ENCODE measurements at regions of chr9 and their contacts with region 1.

Region 1: GRCh38 chr9:132372177-132373095 is 17.6 kb upstream of the SETX start:
- DNase-seq: no peak
- ATAC-seq: no peak
- H3K4me3 Mint-ChIP-seq: peak overlapping the region in 5 of 10 donors; percentile 2 to 60 (median 52)
- H3K27ac Mint-ChIP-seq: peak overlapping the region in 9 of 10 donors; percentile 0 to 91 (median 76)
- H3K4me1 Mint-ChIP-seq: peaks cover 8 to 26% (median 14%) of the 10 kb centered on the region in 4 donors
- H3K27me3 Mint-ChIP-seq: peaks cover 0 to 1% (median 0%) of the 10 kb centered on the region in 5 donors

Region 2: GRCh38 chr9:132312873-132313272 is 59.6 kb before region 1 on chr9:
- POLR2A ChIA-PET with region 1: no interaction called
- DNase-seq: no peak
- ATAC-seq: no peak
- H3K4me3 Mint-ChIP-seq: no peak overlapping the region
- H3K27ac Mint-ChIP-seq: peak overlapping the region in 5 of 10 donors; percentile 1 to 31 (median 14)
- H3K4me1 Mint-ChIP-seq: peaks cover 7 to 32% (median 29%) of the 10 kb centered on the region in 4 donors
- H3K27me3 Mint-ChIP-seq: no peaks in the 10 kb centered on the region

Region 3: GRCh38 chr9:132354637-132355355 is 17.6 kb before region 1 on chr9 and contains the start of gene SETX:
- POLR2A ChIA-PET with region 1: interaction called, 13 read pairs
- DNase-seq: peak; percentile 84 to 97 (median 92)
- ATAC-seq: peak; percentile 86 to 89
- H3K4me3 Mint-ChIP-seq: peak within 1 kb of the TSS; percentile 66 to 96 (median 92)
- H3K27ac Mint-ChIP-seq: peak within 1 kb of the TSS; percentile 95 to 99 (median 97)
- H3K4me1 Mint-ChIP-seq: peaks cover 20 to 47% (median 41%) of the 10 kb centered on the region in 4 donors
- H3K27me3 Mint-ChIP-seq: peaks cover 0 to 1% (median 0%) of the 10 kb centered on the region in 5 donors
- polyA plus RNA-seq, gene SETX: 21.4 to 29.1 (median 25.9) TPM

Region 4: DNA sequence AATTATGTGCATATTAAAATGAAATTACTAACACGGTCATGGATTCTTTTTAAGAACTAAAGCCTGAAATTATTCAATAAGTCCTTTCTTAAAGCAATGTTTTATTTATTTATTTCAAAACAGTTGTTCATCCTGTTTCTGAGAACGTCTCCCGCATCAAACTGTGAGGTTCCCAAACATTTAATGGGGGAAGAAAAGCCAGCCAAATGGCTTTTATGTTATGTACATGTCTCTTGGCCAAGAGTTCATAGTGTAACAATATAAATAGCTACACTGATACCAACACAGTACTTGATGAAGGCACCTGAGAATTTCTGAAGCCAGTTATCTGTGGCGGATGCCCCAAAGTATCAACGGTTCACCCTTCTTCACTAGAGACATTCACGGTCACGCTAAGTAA is 18.5 kb after region 1 on chr9:
- POLR2A ChIA-PET with region 1: no interaction called
- DNase-seq: no peak
- ATAC-seq: no peak
- H3K4me3 Mint-ChIP-seq: no peak overlapping the region
- H3K27ac Mint-ChIP-seq: no peak overlapping the region
- H3K4me1 Mint-ChIP-seq: peaks cover 0 to 3% (median 0%) of the 10 kb centered on the region in 4 donors
- H3K27me3 Mint-ChIP-seq: no peaks in the 10 kb centered on the region

Region 5: GRCh38 chr9:132412089-132412488 is 39.7 kb after region 1 on chr9:
- POLR2A ChIA-PET with region 1: no interaction called
- DNase-seq: peak in 4 of 10 donors; percentile 21 to 31 (median 26)
- ATAC-seq: no peak
- H3K4me3 Mint-ChIP-seq: peak overlapping the region in 3 of 10 donors; percentile 4 to 26 (median 26)
- H3K27ac Mint-ChIP-seq: peak overlapping the region in 1 of 10 donors; percentile 40
- H3K4me1 Mint-ChIP-seq: peaks cover 9 to 28% (median 21%) of the 10 kb centered on the region in 4 donors
- H3K27me3 Mint-ChIP-seq: peaks cover 20 to 57% (median 51%) of the 10 kb centered on the region in 5 donors

Region 6: DNA sequence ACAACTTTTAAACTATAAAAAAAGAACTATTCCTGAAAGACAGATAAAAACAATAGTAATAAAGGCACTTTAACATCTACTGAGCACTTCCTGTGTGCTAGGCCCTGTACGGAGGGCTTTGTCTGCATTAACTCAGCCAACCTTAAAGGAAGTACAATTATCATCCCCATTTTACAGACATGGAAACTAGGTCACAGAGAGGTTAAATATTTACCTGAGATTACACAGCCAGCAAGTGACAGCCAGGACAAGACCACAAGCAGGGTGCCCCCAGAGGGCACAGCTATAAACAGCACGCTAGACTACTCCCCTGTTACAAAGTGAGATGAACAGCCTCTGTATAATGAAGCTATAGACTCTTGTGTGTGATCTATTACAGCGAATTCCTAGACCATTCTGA is 271.8 kb after region 1 on chr9:
- POLR2A ChIA-PET with region 1: no interaction called
- DNase-seq: no peak
- ATAC-seq: no peak
- H3K4me3 Mint-ChIP-seq: no peak overlapping the region
- H3K27ac Mint-ChIP-seq: no peak overlapping the region
- H3K4me1 Mint-ChIP-seq: no peaks in the 10 kb centered on the region
- H3K27me3 Mint-ChIP-seq: no peaks in the 10 kb centered on the region